ENCODE measurements at regions of chr1 and their contacts with region 1.

Region 1: GRCh38 chr1:32500387-32501209 is 35.7 kb downstream of the ZBTB8B start:
- DNase-seq: peak; percentile 79 to 85 (median 82)
- ATAC-seq: peak; percentile 95
- H3K4me3 ChIP-seq: peak overlapping the region; percentile 86
- H3K27ac ChIP-seq: peak overlapping the region; percentile 64; the same call in 1 of the 3 replicates
- H3K4me1 ChIP-seq: peaks cover 3 to 11% of the 10 kb centered on the region in 2 experiments
- H3K27me3 ChIP-seq: peaks cover 6 to 11% of the 10 kb centered on the region in 2 experiments; a peak in 3 of 5 replicates
- CTCF ChIP-seq: peak in 1 of 3 experiments; percentile 37; a peak in 1 of 6 replicates
- EP300 ChIP-seq: no peak
- POLR2A ChIP-seq: no peak
- RAD21 ChIP-seq: peak in 1 of 2 experiments; percentile 35; a peak in 2 of 4 replicates

Region 2: GRCh38 chr1:31593770-31594632 is 906.6 kb before region 1 on chr1:
- CTCF ChIA-PET with region 1: interaction called, 10 read pairs
- POLR2A ChIA-PET with region 1: no interaction called
- in situ Hi-C with region 1: no loop called
- intact Hi-C with region 1: no loop called
- DNase-seq: peak; percentile 73 to 80 (median 78)
- ATAC-seq: peak; percentile 99
- H3K4me3 ChIP-seq: no peak overlapping the region
- H3K27ac ChIP-seq: no peak overlapping the region
- H3K4me1 ChIP-seq: peaks cover 0 to 4% of the 10 kb centered on the region in 2 experiments; a peak in 1 of 5 replicates
- H3K27me3 ChIP-seq: peaks cover 16 to 39% of the 10 kb centered on the region in 2 experiments
- CTCF ChIP-seq: peak; percentile 93 to 97 (median 94)
- EP300 ChIP-seq: no peak
- POLR2A ChIP-seq: no peak
- RAD21 ChIP-seq: peak; percentile 89 to 97

Region 3: DNA sequence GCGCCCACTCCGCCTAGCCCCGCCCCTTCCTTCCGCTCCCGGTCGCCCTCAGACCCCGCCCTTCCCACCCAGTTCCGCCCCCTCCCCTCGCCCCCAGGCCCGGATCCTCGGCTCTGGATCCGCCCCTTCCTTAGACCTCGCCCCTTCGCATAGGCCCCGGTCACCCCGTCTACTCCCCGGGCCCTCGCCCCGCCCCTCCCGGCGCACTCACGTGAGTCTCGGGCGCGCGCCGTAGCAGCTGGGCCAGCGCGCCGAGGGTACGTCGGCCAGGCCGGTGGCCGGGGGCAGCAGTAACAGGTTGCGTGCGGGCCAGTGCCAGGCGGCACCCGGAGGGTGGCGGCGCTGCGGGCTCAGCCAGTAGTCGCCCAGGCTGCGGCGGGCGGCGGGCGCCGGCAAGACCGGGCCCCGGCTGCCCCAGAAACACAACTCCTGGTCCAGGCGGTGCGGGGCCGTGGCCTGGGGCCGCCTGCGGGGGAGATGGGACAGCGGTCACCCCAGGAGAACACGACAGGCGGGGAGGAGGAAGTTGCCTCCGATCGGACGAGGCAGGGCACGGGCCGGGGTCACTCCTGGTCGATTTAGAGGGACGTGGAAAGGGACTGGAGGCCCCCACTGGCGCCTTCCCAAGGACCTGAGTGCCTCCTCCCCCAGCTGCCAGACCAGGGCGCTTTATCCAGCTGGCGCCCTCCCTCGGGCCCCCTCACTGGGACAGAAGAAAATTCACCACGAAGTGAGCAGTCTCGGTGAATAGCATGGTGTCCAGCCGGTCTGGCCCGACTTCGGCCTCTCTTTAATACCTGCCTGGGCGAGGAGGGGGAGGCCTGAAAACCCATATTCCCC is 149.0 kb before region 1 on chr1:
- CTCF ChIA-PET with region 1: no interaction called
- POLR2A ChIA-PET with region 1: no interaction called
- in situ Hi-C with region 1: no loop called
- intact Hi-C with region 1: loop called (anchors 5 kb)
- DNase-seq: peak; percentile 99 to 100 (median 100)
- ATAC-seq: peak; percentile 95
- H3K4me3 ChIP-seq: peak overlapping the region; percentile 83
- H3K27ac ChIP-seq: peak overlapping the region; percentile 96
- H3K4me1 ChIP-seq: peaks cover 29 to 44% of the 10 kb centered on the region in 2 experiments
- H3K27me3 ChIP-seq: no peaks in the 10 kb centered on the region
- CTCF ChIP-seq: peak in 2 of 3 experiments; percentile 34 to 49; a peak in 5 of 6 replicates
- EP300 ChIP-seq: no peak
- POLR2A ChIP-seq: peak; percentile 76
- RAD21 ChIP-seq: no peak

Region 4: GRCh38 chr1:32448773-32449456 is 51.7 kb before region 1 on chr1:
- CTCF ChIA-PET with region 1: no interaction called
- POLR2A ChIA-PET with region 1: no interaction called
- in situ Hi-C with region 1: no loop called
- intact Hi-C with region 1: loop called (anchors 5 kb)
- DNase-seq: peak; percentile 61 to 87 (median 72)
- ATAC-seq: peak; percentile 96
- H3K4me3 ChIP-seq: no peak overlapping the region
- H3K27ac ChIP-seq: peak overlapping the region; percentile 18; the same call in 2 of the 3 replicates
- H3K4me1 ChIP-seq: peaks cover 0 to 4% of the 10 kb centered on the region in 2 experiments; a peak in 3 of 5 replicates
- H3K27me3 ChIP-seq: peaks cover 20 to 21% of the 10 kb centered on the region in 2 experiments; a peak in 4 of 5 replicates
- CTCF ChIP-seq: peak; percentile 85 to 87 (median 87)
- EP300 ChIP-seq: no peak
- POLR2A ChIP-seq: no peak
- RAD21 ChIP-seq: peak; percentile 49 to 69

Region 5: GRCh38 chr1:32480761-32481160 is 19.8 kb before region 1 on chr1:
- CTCF ChIA-PET with region 1: no interaction called
- POLR2A ChIA-PET with region 1: interaction called, 10 read pairs
- in situ Hi-C with region 1: no loop called
- intact Hi-C with region 1: no loop called
- DNase-seq: no peak
- ATAC-seq: no peak; the same call in 2 of the 3 replicates
- H3K4me3 ChIP-seq: no peak overlapping the region
- H3K27ac ChIP-seq: no peak overlapping the region
- H3K4me1 ChIP-seq: no peaks in the 10 kb centered on the region
- H3K27me3 ChIP-seq: peaks cover 41 to 61% of the 10 kb centered on the region in 2 experiments
- CTCF ChIP-seq: no peak
- EP300 ChIP-seq: no peak
- POLR2A ChIP-seq: no peak
- RAD21 ChIP-seq: no peak

Region 6: DNA sequence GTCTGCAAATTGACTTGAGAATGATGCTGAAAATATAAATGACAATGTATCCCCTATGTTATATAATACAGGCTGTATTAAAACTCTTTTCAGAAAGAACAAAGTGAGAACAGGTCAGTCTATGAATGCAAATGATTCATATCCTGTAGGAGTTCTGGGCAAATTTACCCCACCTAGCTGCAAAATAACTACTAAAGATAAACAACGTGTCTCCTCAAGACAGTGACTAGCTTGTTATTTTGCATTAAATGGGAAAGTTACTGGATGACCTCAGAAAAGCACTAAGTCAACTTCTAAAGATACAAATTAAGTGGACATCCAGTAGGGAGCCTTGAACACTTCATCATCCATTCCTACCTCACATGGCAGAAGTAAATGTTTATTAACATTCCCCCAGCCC is 452.9 kb after region 1 on chr1:
- CTCF ChIA-PET with region 1: no interaction called
- POLR2A ChIA-PET with region 1: no interaction called
- in situ Hi-C with region 1: no loop called
- intact Hi-C with region 1: no loop called
- DNase-seq: no peak
- ATAC-seq: no peak
- H3K4me3 ChIP-seq: no peak overlapping the region
- H3K27ac ChIP-seq: no peak overlapping the region
- H3K4me1 ChIP-seq: no peaks in the 10 kb centered on the region
- H3K27me3 ChIP-seq: no peaks in the 10 kb centered on the region
- CTCF ChIP-seq: no peak
- EP300 ChIP-seq: no peak
- POLR2A ChIP-seq: no peak
- RAD21 ChIP-seq: no peak

Measured in K562 (cell line).